Mammary epithelial cell (primary cell): ENCODE measurements at regions of chrX and their contacts with region 1.

Region 1: GRCh38 chrX:101658661-101659491 is 774 bp downstream of the ARMCX2 start:
- DNase-seq: peak; percentile 5
- H3K4me3 ChIP-seq: peak overlapping the region; percentile 26 to 55 (median 41)
- H3K27ac ChIP-seq: no peak overlapping the region
- H3K4me1 ChIP-seq: no peaks in the 10 kb centered on the region
- H3K27me3 ChIP-seq: peaks cover 5% of the 10 kb centered on the region
- CTCF ChIP-seq: no peak

Region 2: GRCh38 chrX:100674705-100675104 is 984.2 kb before region 1 on chrX:
- CTCF ChIA-PET with region 1: interaction called, 24 read pairs
- dilution Hi-C with region 1: no loop called
- in situ Hi-C with region 1: no loop called
- intact Hi-C with region 1: no loop called
- DNase-seq: no peak
- H3K4me3 ChIP-seq: no peak overlapping the region
- H3K27ac ChIP-seq: no peak overlapping the region
- H3K4me1 ChIP-seq: no peaks in the 10 kb centered on the region
- H3K27me3 ChIP-seq: no peaks in the 10 kb centered on the region
- CTCF ChIP-seq: no peak